ENCODE measurements at regions of chr7 and their contacts with region 1.

Region 1: GRCh38 chr7:5997222-5997808 is 11.5 kb downstream of the PMS2 start:
- DNase-seq: peak; percentile 31 to 81
- ATAC-seq: peak; percentile 79 to 91 (median 80)
- H3K4me3 ChIP-seq: no peak overlapping the region
- H3K4me3 Mint-ChIP-seq: no peak overlapping the region
- H3K27ac ChIP-seq: no peak overlapping the region
- H3K27ac Mint-ChIP-seq: no peak overlapping the region
- H3K4me1 ChIP-seq: no peaks in the 10 kb centered on the region
- H3K4me1 Mint-ChIP-seq: no peaks in the 10 kb centered on the region
- H3K27me3 ChIP-seq: no peaks in the 10 kb centered on the region
- H3K27me3 Mint-ChIP-seq: no peaks in the 10 kb centered on the region
- CTCF ChIP-seq: peak; percentile 77

Region 2: GRCh38 chr7:6106140-6106904 is 109.0 kb after region 1 on chr7:
- intact Hi-C with region 1: loop called (anchors 1 kb)
- DNase-seq: peak in 1 of 2 donors; percentile 71
- ATAC-seq: peak in 1 of 3 donors; percentile 5
- H3K4me3 ChIP-seq: peak overlapping the region; percentile 75
- H3K4me3 Mint-ChIP-seq: peak overlapping the region; percentile 97
- H3K27ac ChIP-seq: peak overlapping the region; percentile 84
- H3K27ac Mint-ChIP-seq: peak overlapping the region; percentile 93 to 97
- H3K4me1 ChIP-seq: peaks cover 17% of the 10 kb centered on the region
- H3K4me1 Mint-ChIP-seq: peaks cover 35 to 39% of the 10 kb centered on the region in 2 donors
- H3K27me3 ChIP-seq: no peaks in the 10 kb centered on the region
- H3K27me3 Mint-ChIP-seq: no peaks in the 10 kb centered on the region
- CTCF ChIP-seq: no peak

Region 3: GRCh38 chr7:6323967-6324701 is 326.8 kb after region 1 on chr7:
- intact Hi-C with region 1: loop called (anchors 1 kb)
- DNase-seq: no peak
- ATAC-seq: no peak
- H3K4me3 ChIP-seq: no peak overlapping the region
- H3K4me3 Mint-ChIP-seq: no peak overlapping the region
- H3K27ac ChIP-seq: no peak overlapping the region
- H3K27ac Mint-ChIP-seq: no peak overlapping the region
- H3K4me1 ChIP-seq: no peaks in the 10 kb centered on the region
- H3K4me1 Mint-ChIP-seq: peaks cover 5 to 6% of the 10 kb centered on the region in 2 donors
- H3K27me3 ChIP-seq: no peaks in the 10 kb centered on the region
- H3K27me3 Mint-ChIP-seq: peaks cover 0 to 3% of the 10 kb centered on the region in 2 donors
- CTCF ChIP-seq: no peak

Region 4: DNA sequence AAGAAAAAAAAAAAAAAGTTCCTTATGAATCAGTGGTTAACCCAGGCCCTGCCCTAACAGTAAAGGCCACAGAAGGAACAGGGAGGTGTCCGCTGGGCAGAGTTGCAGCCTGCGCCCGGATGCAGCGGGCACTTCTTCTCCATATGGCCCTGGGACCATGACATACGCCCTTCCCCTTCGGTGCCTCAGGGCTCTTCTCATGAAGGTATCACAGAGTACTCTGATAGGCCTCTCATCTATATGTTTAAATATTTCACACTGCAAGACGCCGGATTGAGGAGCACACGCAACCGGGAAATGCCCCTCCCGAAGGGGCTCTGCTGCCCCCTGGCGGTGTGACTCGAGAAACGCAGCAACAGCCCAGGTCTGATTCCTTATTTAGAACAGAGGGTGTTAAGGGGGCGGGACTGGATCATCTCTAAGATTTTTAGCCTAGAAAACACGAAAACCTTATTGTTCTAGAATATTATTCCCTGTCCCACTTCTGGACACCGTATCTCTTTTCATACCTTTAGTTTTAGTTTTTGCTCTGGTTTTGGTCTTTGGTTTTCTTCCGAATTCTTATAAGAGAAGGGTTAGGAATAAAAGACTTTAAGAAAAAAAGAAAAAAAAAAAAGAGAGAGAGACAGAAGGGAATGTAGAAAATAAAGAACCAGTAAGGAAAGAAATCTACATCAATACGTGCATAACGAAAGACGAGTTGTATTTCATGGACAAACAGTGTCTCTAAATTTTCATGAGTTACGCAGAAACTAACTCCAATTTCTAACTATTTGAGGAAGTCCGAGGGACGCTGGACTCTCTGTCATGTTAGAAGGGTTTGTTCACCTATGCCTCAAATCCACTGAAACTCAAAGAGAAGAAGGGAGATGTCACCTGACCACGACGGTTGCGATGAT is 438.4 kb after region 1 on chr7:
- intact Hi-C with region 1: loop called (anchors 5 kb)
- DNase-seq: peak; percentile 85 to 93
- ATAC-seq: peak; percentile 95 to 98 (median 98)
- H3K4me3 ChIP-seq: peak overlapping the region; percentile 18
- H3K4me3 Mint-ChIP-seq: peak overlapping the region; percentile 80
- H3K27ac ChIP-seq: no peak overlapping the region
- H3K27ac Mint-ChIP-seq: peak overlapping the region; percentile 56 to 71
- H3K4me1 ChIP-seq: peaks cover 24% of the 10 kb centered on the region
- H3K4me1 Mint-ChIP-seq: peaks cover 14 to 19% of the 10 kb centered on the region in 2 donors
- H3K27me3 ChIP-seq: no peaks in the 10 kb centered on the region
- H3K27me3 Mint-ChIP-seq: no peaks in the 10 kb centered on the region
- CTCF ChIP-seq: peak; percentile 92

Measured in natural killer cell (primary cell).